Vagina (tissue), 2 donors: ENCODE measurements at regions of chr9 and their contacts with region 1.

Region 1: GRCh38 chr9:121686930-121687541 is 35.6 kb downstream of the DAB2IP start:
- DNase-seq: no peak
- H3K4me3 ChIP-seq: no peak overlapping the region
- H3K27ac ChIP-seq: no peak overlapping the region
- H3K4me1 ChIP-seq: peaks cover 13% of the 10 kb centered on the region
- H3K27me3 ChIP-seq: no peaks in the 10 kb centered on the region
- CTCF ChIP-seq: peak; percentile 76 to 81 (median 76)
- POLR2A ChIP-seq: no peak

Region 2: DNA sequence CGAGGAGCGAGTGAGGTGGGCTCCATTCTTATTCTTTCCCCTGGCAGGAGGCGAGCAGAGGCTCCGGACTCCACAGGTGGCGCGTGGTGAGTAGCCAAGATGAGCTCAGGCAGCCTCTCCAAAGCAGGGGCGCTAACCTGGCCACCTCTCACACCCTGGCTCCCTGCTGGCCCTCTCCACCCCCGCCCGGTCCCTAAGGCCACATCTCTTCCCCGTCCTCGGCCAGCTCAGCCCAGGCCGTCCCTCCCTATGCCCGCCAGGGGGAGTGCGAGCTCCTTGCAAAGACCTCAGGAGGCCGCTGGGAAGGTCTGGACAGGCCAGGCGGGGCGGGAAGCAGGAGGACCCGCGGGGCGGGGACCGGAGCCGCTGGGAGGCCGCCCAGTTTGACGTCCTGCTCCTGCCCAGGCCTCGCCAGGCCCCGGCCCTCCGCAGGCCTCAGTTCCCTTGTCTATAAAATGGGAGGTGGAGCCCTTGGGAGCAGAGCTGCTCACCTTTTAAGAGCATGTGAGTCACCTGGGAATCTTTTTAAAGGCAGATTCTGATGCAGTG is 141.1 kb before region 1 on chr9:
- intact Hi-C with region 1: loop called (anchors 2 kb)
- DNase-seq: no peak
- H3K4me3 ChIP-seq: no peak overlapping the region
- H3K27ac ChIP-seq: peak overlapping the region; percentile 40
- H3K4me1 ChIP-seq: peaks cover 25% of the 10 kb centered on the region
- H3K27me3 ChIP-seq: no peaks in the 10 kb centered on the region
- CTCF ChIP-seq: peak; percentile 95 to 97 (median 95)
- POLR2A ChIP-seq: no peak

Region 3: GRCh38 chr9:121593066-121593465 is 94.0 kb before region 1 on chr9:
- intact Hi-C with region 1: no loop called
- DNase-seq: no peak
- H3K4me3 ChIP-seq: no peak overlapping the region
- H3K27ac ChIP-seq: no peak overlapping the region
- H3K4me1 ChIP-seq: peaks cover 7% of the 10 kb centered on the region
- H3K27me3 ChIP-seq: no peaks in the 10 kb centered on the region
- CTCF ChIP-seq: no peak
- POLR2A ChIP-seq: no peak

Region 4: GRCh38 chr9:121650217-121651007 is 36.6 kb before region 1 on chr9:
- intact Hi-C with region 1: loop called (anchors 5 kb)
- DNase-seq: no peak
- H3K4me3 ChIP-seq: peak overlapping the region; percentile 61 to 78
- H3K27ac ChIP-seq: peak overlapping the region; percentile 73
- H3K4me1 ChIP-seq: peaks cover 33% of the 10 kb centered on the region
- H3K27me3 ChIP-seq: no peaks in the 10 kb centered on the region
- CTCF ChIP-seq: no peak
- POLR2A ChIP-seq: no peak

Region 5: DNA sequence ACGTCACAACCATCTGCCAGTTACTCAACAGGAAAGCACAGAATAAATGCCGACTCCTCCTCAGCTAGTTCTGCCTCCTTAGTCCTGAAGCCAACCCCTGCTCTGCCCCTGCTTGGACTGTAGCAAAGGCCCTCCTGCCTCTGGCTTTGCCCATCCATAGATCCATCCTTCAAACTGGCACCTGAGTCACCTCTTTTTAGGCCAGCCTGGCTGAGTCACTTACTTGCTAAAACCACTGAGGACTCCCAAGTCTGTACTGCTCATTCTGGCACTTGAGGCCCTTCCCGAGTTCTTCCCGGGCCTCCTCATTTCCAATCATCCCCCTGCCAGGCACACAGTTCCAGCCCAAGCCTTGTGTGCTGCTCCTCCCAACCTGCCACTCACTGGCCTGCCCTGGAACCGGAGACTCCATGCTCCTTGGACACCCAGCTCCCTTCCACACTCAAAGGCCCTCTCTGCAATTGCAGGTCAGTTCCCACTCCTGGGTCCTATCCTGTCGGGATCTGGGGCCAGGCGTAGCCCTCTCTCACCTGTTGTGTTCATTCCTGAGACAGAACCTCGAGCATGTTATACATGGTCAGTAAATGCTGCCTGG is 184.5 kb after region 1 on chr9:
- intact Hi-C with region 1: no loop called
- DNase-seq: no peak
- H3K4me3 ChIP-seq: no peak overlapping the region
- H3K27ac ChIP-seq: no peak overlapping the region
- H3K4me1 ChIP-seq: no peaks in the 10 kb centered on the region
- H3K27me3 ChIP-seq: no peaks in the 10 kb centered on the region
- CTCF ChIP-seq: no peak
- POLR2A ChIP-seq: no peak